Caco-2 (cell line): ENCODE measurements at regions of chr7 and their contacts with region 1.

Region 1: GRCh38 chr7:28921822-28922221 is 36.3 kb downstream of the TRIL start:
- DNase-seq: peak; percentile 62 to 68
- H3K4me3 ChIP-seq: no peak overlapping the region
- H3K4me3 Mint-ChIP-seq: no peak overlapping the region
- H3K27ac Mint-ChIP-seq: no peak overlapping the region
- H3K4me1 ChIP-seq: peaks cover 6% of the 10 kb centered on the region
- H3K4me1 Mint-ChIP-seq: peaks cover 10% of the 10 kb centered on the region
- H3K27me3 ChIP-seq: no peaks in the 10 kb centered on the region
- H3K27me3 Mint-ChIP-seq: no peaks in the 10 kb centered on the region
- CTCF ChIP-seq: peak; percentile 83 to 88

Region 2: DNA sequence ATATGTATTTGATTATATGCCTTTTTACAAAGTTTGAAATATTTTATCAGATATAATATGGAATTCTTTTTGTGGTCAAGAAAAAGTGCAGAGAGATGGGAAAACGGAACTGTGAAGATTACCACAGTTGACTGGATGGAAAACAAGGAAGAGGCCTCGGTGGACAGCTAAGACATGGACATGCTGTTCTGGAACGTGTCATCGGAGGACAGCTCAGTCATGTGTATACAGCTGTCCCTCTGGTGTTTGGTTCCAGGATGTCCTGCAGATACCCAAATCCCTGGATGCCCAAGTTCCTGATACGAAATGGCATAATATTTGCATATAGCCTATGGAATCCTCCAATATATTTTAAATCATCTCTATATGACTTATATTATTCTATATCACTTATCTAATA is 13.0 kb before region 1 on chr7:
- CTCF ChIA-PET with region 1: interaction called, 14 read pairs
- POLR2A ChIA-PET with region 1: no interaction called
- intact Hi-C with region 1: no loop called
- DNase-seq: no peak
- H3K4me3 ChIP-seq: no peak overlapping the region
- H3K4me3 Mint-ChIP-seq: no peak overlapping the region
- H3K27ac Mint-ChIP-seq: no peak overlapping the region
- H3K4me1 ChIP-seq: 0 out of 2 replicates have a peak, but pooled peaks cover 5% of the 10 kb centered on the region
- H3K4me1 Mint-ChIP-seq: no peaks in the 10 kb centered on the region
- H3K27me3 ChIP-seq: no peaks in the 10 kb centered on the region
- H3K27me3 Mint-ChIP-seq: no peaks in the 10 kb centered on the region
- CTCF ChIP-seq: no peak

Region 3: GRCh38 chr7:29099891-29100847 is 178.3 kb after region 1 on chr7:
- CTCF ChIA-PET with region 1: interaction called, 68 read pairs
- POLR2A ChIA-PET with region 1: no interaction called
- intact Hi-C with region 1: loop called (anchors 1 kb)
- DNase-seq: peak; percentile 71 to 82
- H3K4me3 ChIP-seq: no peak overlapping the region
- H3K4me3 Mint-ChIP-seq: peak overlapping the region; percentile 57
- H3K27ac Mint-ChIP-seq: peak overlapping the region; percentile 85
- H3K4me1 ChIP-seq: peaks cover 37% of the 10 kb centered on the region
- H3K4me1 Mint-ChIP-seq: peaks cover 40% of the 10 kb centered on the region
- H3K27me3 ChIP-seq: no peaks in the 10 kb centered on the region
- H3K27me3 Mint-ChIP-seq: no peaks in the 10 kb centered on the region
- CTCF ChIP-seq: no peak

Region 4: GRCh38 chr7:29113384-29114103 is 191.7 kb after region 1 on chr7:
- CTCF ChIA-PET with region 1: interaction called, 22 read pairs
- POLR2A ChIA-PET with region 1: no interaction called
- intact Hi-C with region 1: no loop called
- DNase-seq: peak; percentile 70 to 73
- H3K4me3 ChIP-seq: no peak overlapping the region
- H3K4me3 Mint-ChIP-seq: peak overlapping the region; percentile 30
- H3K27ac Mint-ChIP-seq: peak overlapping the region; percentile 89
- H3K4me1 ChIP-seq: peaks cover 76% of the 10 kb centered on the region
- H3K4me1 Mint-ChIP-seq: peaks cover 59% of the 10 kb centered on the region
- H3K27me3 ChIP-seq: no peaks in the 10 kb centered on the region
- H3K27me3 Mint-ChIP-seq: no peaks in the 10 kb centered on the region
- CTCF ChIP-seq: peak in 1 of 2 experiments; percentile 60

Region 5: DNA sequence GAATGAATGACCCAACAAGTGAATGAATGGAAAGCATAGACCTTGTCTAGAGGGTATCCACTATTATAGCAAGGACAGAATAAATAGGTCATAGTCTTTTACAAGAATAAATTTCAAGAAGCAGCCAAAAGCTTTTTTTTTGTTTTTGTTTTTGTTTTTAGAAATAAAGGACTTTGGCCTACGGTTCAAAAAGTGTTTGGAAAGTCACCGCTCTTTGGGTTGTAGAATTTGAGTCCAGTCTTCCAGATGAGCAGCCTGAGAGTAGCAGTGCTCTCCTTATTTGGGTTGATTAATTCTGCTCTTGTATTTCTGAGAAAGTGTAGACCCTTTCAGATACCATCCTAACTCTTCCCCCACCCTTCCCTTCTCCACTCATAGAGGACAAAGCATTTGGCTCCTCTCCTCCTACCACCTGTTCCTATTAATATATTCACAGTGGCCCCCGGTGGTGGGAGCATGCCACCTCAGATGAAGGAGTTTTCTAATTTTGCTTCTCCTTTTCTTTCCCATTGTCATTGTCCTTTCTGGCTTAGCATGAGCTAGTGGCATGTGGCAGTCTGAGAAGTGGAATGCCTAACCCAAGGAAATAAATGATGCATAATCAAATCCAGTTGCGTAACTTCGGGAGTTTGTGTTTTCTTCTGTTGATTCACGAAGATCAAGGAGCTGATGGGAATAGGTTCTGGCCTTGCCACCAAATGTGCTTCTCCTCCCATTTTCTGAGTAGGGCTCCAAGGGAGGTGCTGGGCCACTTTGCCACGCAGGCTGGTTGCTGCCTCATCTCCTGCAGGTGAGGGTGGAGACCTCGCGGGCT is 387.4 kb after region 1 on chr7:
- CTCF ChIA-PET with region 1: interaction called, 4 read pairs
- POLR2A ChIA-PET with region 1: no interaction called
- intact Hi-C with region 1: loop called (anchors 2 kb)
- DNase-seq: peak; percentile 50 to 64
- H3K4me3 ChIP-seq: no peak overlapping the region
- H3K4me3 Mint-ChIP-seq: no peak overlapping the region
- H3K27ac Mint-ChIP-seq: no peak overlapping the region
- H3K4me1 ChIP-seq: peaks cover 45% of the 10 kb centered on the region
- H3K4me1 Mint-ChIP-seq: peaks cover 41% of the 10 kb centered on the region
- H3K27me3 ChIP-seq: no peaks in the 10 kb centered on the region
- H3K27me3 Mint-ChIP-seq: no peaks in the 10 kb centered on the region
- CTCF ChIP-seq: peak; percentile 59 to 70

Region 6: GRCh38 chr7:29408841-29409243 is 487.0 kb after region 1 on chr7:
- CTCF ChIA-PET with region 1: interaction called, 19 read pairs
- POLR2A ChIA-PET with region 1: no interaction called
- intact Hi-C with region 1: loop called (anchors 1 kb)
- DNase-seq: peak in 1 of 2 experiments; percentile 76
- H3K4me3 ChIP-seq: no peak overlapping the region
- H3K4me3 Mint-ChIP-seq: no peak overlapping the region
- H3K27ac Mint-ChIP-seq: no peak overlapping the region
- H3K4me1 ChIP-seq: peaks cover 23% of the 10 kb centered on the region
- H3K4me1 Mint-ChIP-seq: peaks cover 22% of the 10 kb centered on the region
- H3K27me3 ChIP-seq: no peaks in the 10 kb centered on the region
- H3K27me3 Mint-ChIP-seq: no peaks in the 10 kb centered on the region
- CTCF ChIP-seq: peak; percentile 74 to 86